GM12878 (cell line): ENCODE measurements at regions of chr3 and their contacts with region 1.

Region 1: GRCh38 chr3:4845882-4846281 is 133.4 kb upstream of the BHLHE40 start:
- DNase-seq: peak; percentile 89
- ATAC-seq: peak; percentile 75
- H3K4me3 ChIP-seq: no peak overlapping the region
- H3K27ac ChIP-seq: peak overlapping the region; percentile 74
- H3K4me1 ChIP-seq: peaks cover 45% of the 10 kb centered on the region
- H3K27me3 ChIP-seq: no peaks in the 10 kb centered on the region
- CTCF ChIP-seq: no peak
- EP300 ChIP-seq: peak; percentile 98 to 99
- POLR2A ChIP-seq: no peak
- RAD21 ChIP-seq: no peak

Region 2: DNA sequence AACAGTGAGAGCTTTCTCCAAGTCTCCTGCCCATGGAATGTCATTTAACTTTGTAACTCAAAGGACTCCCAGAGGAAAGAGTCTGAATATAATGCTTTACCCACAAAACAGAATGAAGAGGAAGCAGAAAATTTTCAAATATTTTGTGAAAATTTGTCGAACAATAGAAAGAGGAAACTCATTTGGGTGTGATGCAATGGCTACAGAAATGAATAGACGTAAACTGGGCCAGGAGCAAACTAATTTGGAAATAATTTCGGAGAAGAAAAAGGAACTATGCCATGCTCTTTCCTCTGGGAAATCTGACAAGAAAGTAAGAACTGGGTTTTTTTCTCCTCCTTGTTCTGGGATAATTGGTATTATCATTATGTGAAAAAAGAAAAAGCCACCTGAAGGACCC is 367.6 kb before region 1 on chr3:
- CTCF ChIA-PET with region 1: no interaction called
- POLR2A ChIA-PET with region 1: no interaction called
- RAD21 ChIA-PET with region 1: no interaction called
- SMC1A ChIA-PET with region 1: no interaction called
- in situ Hi-C with region 1: no loop called
- intact Hi-C with region 1: no loop called
- DNase-seq: no peak
- ATAC-seq: no peak
- H3K4me3 ChIP-seq: no peak overlapping the region
- H3K27ac ChIP-seq: no peak overlapping the region
- H3K4me1 ChIP-seq: peaks cover 18% of the 10 kb centered on the region
- H3K27me3 ChIP-seq: no peaks in the 10 kb centered on the region
- CTCF ChIP-seq: no peak
- EP300 ChIP-seq: no peak
- POLR2A ChIP-seq: no peak
- RAD21 ChIP-seq: no peak

Region 3: DNA sequence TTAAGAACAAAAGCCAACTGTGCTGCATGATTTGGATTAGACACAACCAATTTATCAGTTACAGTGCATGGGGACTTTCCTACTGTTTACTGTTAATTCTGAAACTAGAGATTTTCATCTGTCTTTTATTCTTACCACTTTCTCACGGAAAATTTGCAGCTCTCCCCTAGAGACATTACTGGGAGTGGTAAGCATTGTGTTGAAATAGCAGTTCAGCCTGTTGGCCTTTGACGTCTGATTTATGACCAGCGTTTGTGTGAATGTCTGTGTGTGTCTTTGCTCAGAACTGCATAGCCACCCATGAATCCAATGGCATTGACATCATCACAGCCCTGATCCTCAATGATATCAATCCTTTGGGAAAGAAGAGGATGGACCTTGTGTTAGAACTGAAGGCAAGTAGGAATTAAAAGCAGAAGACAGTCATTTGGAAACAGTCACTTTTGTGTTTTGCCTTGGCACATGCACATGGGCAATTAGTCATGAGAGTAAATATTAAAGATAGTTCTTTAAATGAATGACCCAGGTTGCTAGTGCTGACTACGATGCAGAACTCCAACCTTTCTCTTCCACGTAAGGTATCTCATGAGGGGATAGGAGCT is 68.8 kb before region 1 on chr3:
- CTCF ChIA-PET with region 1: interaction called, 5 read pairs
- POLR2A ChIA-PET with region 1: no interaction called
- RAD21 ChIA-PET with region 1: interaction called, 7 read pairs
- SMC1A ChIA-PET with region 1: interaction called, 5 read pairs
- in situ Hi-C with region 1: no loop called
- intact Hi-C with region 1: loop called (anchors 1 kb)
- DNase-seq: peak; percentile 98
- ATAC-seq: peak; percentile 82
- H3K4me3 ChIP-seq: no peak overlapping the region
- H3K27ac ChIP-seq: peak overlapping the region; percentile 99
- H3K4me1 ChIP-seq: peaks cover 32% of the 10 kb centered on the region
- H3K27me3 ChIP-seq: no peaks in the 10 kb centered on the region
- CTCF ChIP-seq: no peak
- EP300 ChIP-seq: peak; percentile 90 to 97; a peak in 3 of 4 replicates
- POLR2A ChIP-seq: peak; percentile 53; the same call in 1 of the 2 replicates
- RAD21 ChIP-seq: peak; percentile 41

Region 4: GRCh38 chr3:4866841-4867240 is 21.0 kb after region 1 on chr3:
- CTCF ChIA-PET with region 1: interaction called, 3 read pairs
- POLR2A ChIA-PET with region 1: no interaction called
- RAD21 ChIA-PET with region 1: interaction called, 12 read pairs
- SMC1A ChIA-PET with region 1: interaction called, 5 read pairs
- in situ Hi-C with region 1: no loop called
- intact Hi-C with region 1: no loop called
- DNase-seq: no peak
- ATAC-seq: no peak
- H3K4me3 ChIP-seq: no peak overlapping the region
- H3K27ac ChIP-seq: no peak overlapping the region
- H3K4me1 ChIP-seq: peaks cover 10% of the 10 kb centered on the region
- H3K27me3 ChIP-seq: no peaks in the 10 kb centered on the region
- CTCF ChIP-seq: no peak
- EP300 ChIP-seq: no peak
- POLR2A ChIP-seq: no peak
- RAD21 ChIP-seq: no peak

Region 5: DNA sequence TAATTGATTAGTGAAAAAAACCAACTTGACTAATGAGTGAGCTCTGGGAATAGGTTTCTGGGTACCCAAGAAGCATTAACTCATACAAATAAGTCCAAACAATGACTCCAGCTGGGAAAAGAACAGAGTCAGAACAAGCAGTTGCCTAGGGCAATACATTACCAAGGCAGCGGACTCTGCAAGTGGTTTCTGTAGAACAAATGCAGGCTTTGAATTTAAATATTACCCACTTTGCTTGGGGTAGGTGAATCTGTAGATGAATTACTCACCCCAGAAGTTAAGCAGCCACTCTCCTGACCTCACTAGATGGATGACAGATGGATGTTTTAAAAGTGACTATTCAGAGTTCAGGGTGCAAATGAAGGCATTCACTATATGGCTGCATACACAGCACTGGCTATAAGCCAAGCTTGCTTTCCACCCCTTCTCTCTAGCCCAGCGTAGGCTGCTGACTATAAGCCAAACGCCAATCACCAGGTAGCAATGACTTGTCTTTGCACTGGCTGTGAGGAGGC is 60.3 kb after region 1 on chr3:
- CTCF ChIA-PET with region 1: interaction called, 3 read pairs
- POLR2A ChIA-PET with region 1: interaction called, 3 read pairs
- RAD21 ChIA-PET with region 1: interaction called, 4 read pairs
- SMC1A ChIA-PET with region 1: interaction called, 21 read pairs
- in situ Hi-C with region 1: no loop called
- intact Hi-C with region 1: no loop called
- DNase-seq: no peak
- ATAC-seq: peak; percentile 73
- H3K4me3 ChIP-seq: no peak overlapping the region
- H3K27ac ChIP-seq: no peak overlapping the region
- H3K4me1 ChIP-seq: peaks cover 22% of the 10 kb centered on the region
- H3K27me3 ChIP-seq: no peaks in the 10 kb centered on the region
- CTCF ChIP-seq: no peak
- EP300 ChIP-seq: no peak
- POLR2A ChIP-seq: no peak
- RAD21 ChIP-seq: no peak

Region 6: GRCh38 chr3:4986782-4987537 is 141.1 kb after region 1 on chr3:
- CTCF ChIA-PET with region 1: interaction called, 10 read pairs
- POLR2A ChIA-PET with region 1: interaction called, 6 read pairs
- RAD21 ChIA-PET with region 1: interaction called, 17 read pairs
- SMC1A ChIA-PET with region 1: interaction called, 14 read pairs
- in situ Hi-C with region 1: no loop called
- intact Hi-C with region 1: no loop called
- DNase-seq: no peak
- ATAC-seq: peak; percentile 69
- H3K4me3 ChIP-seq: peak overlapping the region; percentile 70
- H3K27ac ChIP-seq: peak overlapping the region; percentile 86
- H3K4me1 ChIP-seq: peaks cover 38% of the 10 kb centered on the region
- H3K27me3 ChIP-seq: no peaks in the 10 kb centered on the region
- CTCF ChIP-seq: no peak
- EP300 ChIP-seq: 0 out of 4 replicates have a peak, but pooled peaks of 1 of the 2 experiments have one; percentile 58
- POLR2A ChIP-seq: peak; percentile 92
- RAD21 ChIP-seq: no peak; the same call in 1 of the 2 replicates

Region 7: DNA sequence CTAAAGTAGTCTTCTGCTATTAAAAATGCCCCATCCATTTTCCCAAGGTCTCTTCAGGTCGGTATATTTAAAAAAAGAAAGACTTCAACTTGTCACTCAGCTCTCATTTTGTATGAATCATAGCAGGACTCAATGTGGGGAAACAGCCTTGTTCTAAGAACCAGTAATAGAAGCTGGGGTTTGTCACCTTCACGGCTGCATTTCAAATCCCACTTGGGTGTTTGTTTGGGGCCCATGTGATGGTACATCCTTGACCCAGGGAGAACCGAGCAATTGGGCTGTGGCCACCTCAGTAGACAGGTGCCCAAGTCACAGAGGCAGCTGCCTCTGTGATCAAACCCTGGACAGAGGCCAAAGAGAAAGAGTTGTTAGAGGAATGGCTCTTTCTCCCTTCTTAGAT is 205.9 kb after region 1 on chr3:
- CTCF ChIA-PET with region 1: interaction called, 4 read pairs
- POLR2A ChIA-PET with region 1: no interaction called
- RAD21 ChIA-PET with region 1: interaction called, 12 read pairs
- SMC1A ChIA-PET with region 1: interaction called, 11 read pairs
- in situ Hi-C with region 1: no loop called
- intact Hi-C with region 1: loop called (anchors 5 kb)
- DNase-seq: peak; percentile 35
- ATAC-seq: peak; percentile 86
- H3K4me3 ChIP-seq: no peak overlapping the region
- H3K27ac ChIP-seq: no peak overlapping the region; the same call in 1 of the 2 replicates
- H3K4me1 ChIP-seq: peaks cover 38% of the 10 kb centered on the region
- H3K27me3 ChIP-seq: no peaks in the 10 kb centered on the region
- CTCF ChIP-seq: no peak
- EP300 ChIP-seq: peak; percentile 77 to 79
- POLR2A ChIP-seq: no peak
- RAD21 ChIP-seq: no peak

Region 8: GRCh38 chr3:5205165-5205941 is 359.5 kb after region 1 on chr3:
- CTCF ChIA-PET with region 1: no interaction called
- POLR2A ChIA-PET with region 1: no interaction called
- RAD21 ChIA-PET with region 1: no interaction called
- SMC1A ChIA-PET with region 1: no interaction called
- in situ Hi-C with region 1: no loop called
- intact Hi-C with region 1: no loop called
- DNase-seq: peak; percentile 86
- ATAC-seq: peak; percentile 98
- H3K4me3 ChIP-seq: no peak overlapping the region
- H3K27ac ChIP-seq: peak overlapping the region; percentile 38
- H3K4me1 ChIP-seq: peaks cover 9% of the 10 kb centered on the region
- H3K27me3 ChIP-seq: no peaks in the 10 kb centered on the region
- CTCF ChIP-seq: no peak
- EP300 ChIP-seq: peak; percentile 62 to 88; a peak in 3 of 4 replicates
- POLR2A ChIP-seq: 0 out of 2 replicates have a peak, but pooled peaks have one; percentile 40
- RAD21 ChIP-seq: peak; percentile 29; the same call in 1 of the 2 replicates